ENCODE measurements at regions of chr2 and their contacts with region 1.

Region 1: DNA sequence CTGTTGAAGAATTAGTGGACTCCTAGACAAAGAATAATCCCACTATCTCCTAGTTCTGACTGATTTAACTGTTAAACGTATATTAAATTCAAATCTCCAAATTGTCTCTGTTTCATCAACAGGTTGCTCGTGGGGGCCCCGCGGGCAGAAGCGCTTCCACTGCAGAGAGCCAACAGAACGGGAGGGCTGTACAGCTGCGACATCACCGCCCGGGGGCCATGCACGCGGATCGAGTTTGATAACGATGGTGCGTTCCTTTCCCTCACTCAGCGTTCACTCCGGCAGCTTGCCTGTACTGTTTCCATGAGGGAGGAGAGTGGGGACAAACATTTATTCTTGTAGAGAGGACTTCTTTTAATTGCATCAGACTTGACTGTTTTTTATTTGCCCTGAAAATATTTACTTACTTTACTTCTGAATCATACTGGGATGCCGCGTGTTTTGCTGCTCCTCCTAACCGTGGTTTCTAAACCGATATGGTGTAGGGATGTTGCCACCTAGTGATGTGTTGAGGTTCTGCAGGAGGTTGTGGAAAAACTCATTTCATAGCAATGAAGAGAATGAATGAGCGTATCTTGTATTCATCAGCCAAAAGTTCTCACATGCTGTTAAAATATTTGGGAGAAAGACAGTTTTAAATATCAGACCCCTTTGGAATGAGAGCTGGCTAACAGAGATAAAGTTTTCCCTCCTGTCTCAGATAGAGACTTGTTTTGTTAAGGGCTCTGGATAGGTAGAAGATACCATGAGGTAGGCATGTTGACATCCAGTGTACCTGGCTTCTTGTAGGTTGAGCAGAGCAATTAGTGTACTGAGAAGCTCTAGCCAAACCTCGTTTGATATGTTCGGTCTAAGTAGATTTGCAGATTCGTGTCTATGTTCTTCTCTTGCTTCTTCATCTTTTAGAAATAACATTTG is 38.3 kb downstream of the ITGA6 start:
- DNase-seq: peak; percentile 78 to 91
- H3K4me3 ChIP-seq: no peak overlapping the region
- H3K27ac ChIP-seq: peak overlapping the region; percentile 61
- H3K4me1 ChIP-seq: peaks cover 49% of the 10 kb centered on the region
- H3K27me3 ChIP-seq: no peaks in the 10 kb centered on the region
- CTCF ChIP-seq: peak; percentile 100

Region 2: DNA sequence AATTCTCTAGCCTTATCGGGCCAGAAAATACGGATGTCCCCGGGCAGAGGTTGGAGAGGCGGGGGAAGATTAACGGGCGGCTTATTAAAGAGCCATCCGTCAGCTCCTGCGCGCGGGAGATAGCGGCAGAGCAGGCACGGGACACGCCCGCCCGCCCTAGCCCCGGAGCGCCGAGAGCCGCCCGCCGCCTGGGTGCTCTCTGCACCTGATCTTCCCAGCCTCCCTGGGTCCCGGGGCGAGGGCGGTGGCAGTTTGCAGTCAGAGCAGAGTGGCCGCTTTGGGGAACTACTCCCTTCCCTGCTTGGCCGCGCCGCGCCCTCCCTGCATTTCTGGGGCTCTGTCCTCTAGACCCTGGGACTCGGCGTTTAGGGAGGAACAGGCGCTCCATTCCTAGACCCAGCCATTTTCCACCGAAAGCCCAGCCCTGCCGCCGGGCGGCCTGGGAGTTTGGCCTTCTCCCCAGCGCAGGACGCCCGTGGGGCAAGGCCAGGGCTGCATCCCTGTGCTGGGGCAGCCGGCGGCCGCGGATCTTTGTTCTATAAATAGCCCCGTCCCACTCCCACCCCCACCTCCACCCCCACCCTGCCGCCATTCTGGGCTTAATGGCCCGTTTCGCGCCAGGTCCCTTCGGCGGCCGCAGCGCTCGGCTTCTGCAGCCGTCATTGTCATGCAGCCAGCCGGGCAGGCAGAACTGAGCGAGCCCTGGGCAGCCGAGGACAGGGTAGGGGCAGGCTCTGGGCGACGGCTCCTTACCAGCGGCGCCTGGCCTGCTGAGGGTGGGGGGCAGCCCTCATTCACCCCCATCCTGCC is 1642.4 kb before region 1 on chr2:
- CTCF ChIA-PET with region 1: no interaction called
- POLR2A ChIA-PET with region 1: no interaction called
- intact Hi-C with region 1: no loop called
- DNase-seq: no peak
- H3K4me3 ChIP-seq: no peak overlapping the region
- H3K27ac ChIP-seq: no peak overlapping the region
- H3K4me1 ChIP-seq: no peaks in the 10 kb centered on the region
- H3K27me3 ChIP-seq: no peaks in the 10 kb centered on the region
- CTCF ChIP-seq: no peak

Region 3: DNA sequence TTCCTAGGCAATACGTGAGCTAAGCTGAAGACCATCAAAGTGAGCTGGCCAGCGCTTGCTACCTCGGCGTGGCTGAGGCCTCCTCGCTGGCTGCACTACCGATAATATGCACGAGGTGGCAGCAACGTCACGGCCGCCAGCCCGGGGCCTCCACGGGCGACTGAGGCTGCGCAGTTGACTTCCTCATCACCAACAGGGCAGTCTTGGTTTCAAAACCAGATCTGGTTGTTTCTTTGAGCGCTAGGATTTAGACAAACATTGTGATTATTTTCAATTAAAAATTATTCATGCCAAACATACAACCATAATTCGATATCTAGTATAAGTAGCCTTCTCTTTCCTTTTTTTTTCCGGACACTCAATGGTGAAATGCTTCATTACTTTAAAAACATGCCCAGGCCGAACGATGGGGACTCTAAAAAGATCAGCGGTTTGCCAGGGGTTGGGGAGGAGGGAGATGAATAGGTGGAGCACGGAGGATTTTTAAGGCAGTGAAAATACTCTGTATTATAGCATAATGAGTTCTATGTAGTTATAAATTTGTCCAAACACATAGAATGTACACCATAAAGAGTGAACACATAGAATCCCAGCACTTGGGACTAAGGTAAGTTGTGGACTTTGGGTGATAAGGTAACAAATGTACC is 891.4 kb before region 1 on chr2:
- CTCF ChIA-PET with region 1: no interaction called
- POLR2A ChIA-PET with region 1: no interaction called
- intact Hi-C with region 1: loop called (anchors 10 kb)
- DNase-seq: peak; percentile 55 to 86
- H3K4me3 ChIP-seq: no peak overlapping the region
- H3K27ac ChIP-seq: no peak overlapping the region
- H3K4me1 ChIP-seq: no peaks in the 10 kb centered on the region
- H3K27me3 ChIP-seq: no peaks in the 10 kb centered on the region
- CTCF ChIP-seq: peak; percentile 98

Region 4: DNA sequence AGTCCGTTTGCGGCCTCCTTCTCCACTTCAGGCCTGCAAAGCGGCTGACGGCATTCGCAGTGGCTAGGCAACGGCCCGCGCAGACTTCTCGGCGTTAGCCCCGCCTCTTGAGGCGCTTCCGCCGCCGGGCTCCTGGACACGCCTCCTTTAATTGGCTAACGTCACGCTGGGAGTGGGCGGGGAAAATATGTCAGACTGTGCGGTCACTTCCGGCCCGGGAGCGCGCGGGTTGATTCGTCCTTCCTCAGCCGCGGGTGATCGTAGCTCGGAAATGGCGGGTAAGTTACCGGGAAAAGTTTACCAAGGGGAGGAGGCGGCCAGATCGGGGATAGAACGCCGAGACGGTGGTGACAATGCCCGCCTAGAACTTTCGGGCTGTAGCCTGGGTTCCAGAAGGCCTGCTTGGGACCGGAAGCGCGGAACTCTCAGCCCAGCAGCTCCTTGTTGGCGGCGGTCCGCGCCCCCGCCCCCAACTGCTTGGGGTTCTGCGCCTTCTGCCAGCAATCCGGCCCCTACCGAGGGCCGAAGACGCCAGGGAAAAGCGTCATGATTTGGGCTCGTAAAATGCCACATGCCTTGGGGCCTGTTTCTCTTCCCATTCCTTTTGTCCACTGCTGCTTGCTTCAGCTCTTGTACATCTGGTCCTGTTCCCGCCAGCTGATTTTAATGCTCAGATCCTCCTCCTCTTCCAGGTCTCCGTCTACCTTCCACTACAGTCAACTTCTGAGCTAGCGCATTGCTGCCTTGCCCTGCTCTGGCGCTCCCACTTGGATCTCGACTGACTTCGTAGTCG is 543.2 kb before region 1 on chr2 and contains the start of gene HAT1:
- CTCF ChIA-PET with region 1: no interaction called
- POLR2A ChIA-PET with region 1: no interaction called
- intact Hi-C with region 1: loop called (anchors 1 kb)
- DNase-seq: peak; percentile 98 to 100
- H3K4me3 ChIP-seq: peak within 1 kb of the TSS; percentile 68
- H3K27ac ChIP-seq: peak within 1 kb of the TSS; percentile 52
- H3K4me1 ChIP-seq: peaks cover 25% of the 10 kb centered on the region
- H3K27me3 ChIP-seq: no peaks in the 10 kb centered on the region
- CTCF ChIP-seq: no peak
- total RNA-seq, gene HAT1: 96.4 and 132 TPM in 2 replicates

Region 5: GRCh38 chr2:172131713-172132555 is 333.7 kb before region 1 on chr2:
- CTCF ChIA-PET with region 1: interaction called, 6 read pairs
- POLR2A ChIA-PET with region 1: interaction called, 24 read pairs
- intact Hi-C with region 1: loop called (anchors 1 kb)
- DNase-seq: no peak
- H3K4me3 ChIP-seq: no peak overlapping the region
- H3K27ac ChIP-seq: no peak overlapping the region
- H3K4me1 ChIP-seq: no peaks in the 10 kb centered on the region
- H3K27me3 ChIP-seq: no peaks in the 10 kb centered on the region
- CTCF ChIP-seq: no peak

Region 6: DNA sequence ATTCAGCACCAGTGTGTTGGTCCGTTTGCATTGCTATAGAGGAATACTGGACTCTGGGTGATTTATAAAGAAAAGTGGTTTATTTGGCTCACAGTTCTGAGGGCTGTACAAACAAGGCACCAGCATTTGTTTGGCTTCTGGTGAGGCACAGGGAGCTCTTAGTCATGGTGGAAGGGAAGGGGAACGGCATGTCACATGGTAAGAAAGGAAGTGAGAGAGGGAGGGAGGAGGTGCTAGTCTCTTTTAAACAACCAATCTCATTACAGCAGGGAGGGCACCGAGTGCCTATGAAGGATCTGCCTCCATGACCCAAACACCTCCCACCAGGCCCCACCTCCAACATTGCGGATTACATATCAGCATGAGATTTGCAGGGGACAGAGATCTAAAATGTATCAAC is 219.0 kb before region 1 on chr2:
- CTCF ChIA-PET with region 1: interaction called, 23 read pairs
- POLR2A ChIA-PET with region 1: no interaction called
- intact Hi-C with region 1: loop called (anchors 1 kb)
- DNase-seq: peak in 1 of 2 experiments; percentile 46
- H3K4me3 ChIP-seq: no peak overlapping the region
- H3K27ac ChIP-seq: peak overlapping the region; percentile 70
- H3K4me1 ChIP-seq: peaks cover 62% of the 10 kb centered on the region
- H3K27me3 ChIP-seq: no peaks in the 10 kb centered on the region
- CTCF ChIP-seq: no peak

Region 7: GRCh38 chr2:172427256-172427989 is 38.3 kb before region 1 on chr2 and contains the start of gene ITGA6:
- CTCF ChIA-PET with region 1: interaction called, 87 read pairs
- POLR2A ChIA-PET with region 1: interaction called, 6 read pairs
- intact Hi-C with region 1: loop called (anchors 1 kb)
- DNase-seq: peak; percentile 87 to 96
- H3K4me3 ChIP-seq: peak within 1 kb of the TSS; percentile 57
- H3K27ac ChIP-seq: peak within 1 kb of the TSS; percentile 52
- H3K4me1 ChIP-seq: peaks cover 45% of the 10 kb centered on the region
- H3K27me3 ChIP-seq: no peaks in the 10 kb centered on the region
- CTCF ChIP-seq: peak; percentile 43; the same call in 1 of the 2 replicates
- total RNA-seq, gene ITGA6: 180 and 213 TPM in 2 replicates

Region 8: GRCh38 chr2:172510088-172510487 is 44.4 kb after region 1 on chr2:
- CTCF ChIA-PET with region 1: no interaction called
- POLR2A ChIA-PET with region 1: no interaction called
- intact Hi-C with region 1: no loop called
- DNase-seq: no peak
- H3K4me3 ChIP-seq: no peak overlapping the region
- H3K27ac ChIP-seq: no peak overlapping the region
- H3K4me1 ChIP-seq: no peaks in the 10 kb centered on the region
- H3K27me3 ChIP-seq: no peaks in the 10 kb centered on the region
- CTCF ChIP-seq: no peak